Right ventricle myocardium inferior (tissue), 1 donor: ENCODE measurements at regions of chr15 and their contacts with region 1.

Region 1: GRCh38 chr15:92018535-92019239 is 165.2 kb downstream of the SLCO3A1 start:
- DNase-seq: peak; percentile 63
- ATAC-seq: peak; percentile 63

Region 2: DNA sequence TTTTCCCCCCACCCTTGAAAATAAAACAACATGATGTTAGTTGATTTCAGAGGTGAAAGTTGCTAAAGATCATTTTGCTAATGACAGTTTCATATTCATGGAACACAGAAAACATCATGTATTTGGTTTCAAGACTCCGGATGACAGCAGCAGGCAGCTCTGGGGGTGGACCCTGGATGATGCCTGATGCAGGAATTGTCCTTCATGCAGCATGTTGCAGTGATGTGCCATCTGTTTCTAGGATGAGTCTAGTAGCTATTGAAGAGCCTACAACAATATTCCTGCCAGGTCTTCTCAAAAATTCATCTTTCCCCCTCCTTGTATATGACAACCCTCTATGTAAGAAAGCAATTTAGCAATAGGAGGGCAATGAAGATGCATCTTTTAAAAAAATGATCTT is 810.3 kb before region 1 on chr15:
- intact Hi-C with region 1: no loop called
- DNase-seq: no peak
- ATAC-seq: no peak

Region 3: GRCh38 chr15:92059056-92059960 is 40.6 kb after region 1 on chr15:
- intact Hi-C with region 1: loop called (anchors 5 kb)
- DNase-seq: no peak
- ATAC-seq: peak; percentile 52